A673 (cell line): ENCODE measurements at regions of chr5 and their contacts with region 1.

Region 1: DNA sequence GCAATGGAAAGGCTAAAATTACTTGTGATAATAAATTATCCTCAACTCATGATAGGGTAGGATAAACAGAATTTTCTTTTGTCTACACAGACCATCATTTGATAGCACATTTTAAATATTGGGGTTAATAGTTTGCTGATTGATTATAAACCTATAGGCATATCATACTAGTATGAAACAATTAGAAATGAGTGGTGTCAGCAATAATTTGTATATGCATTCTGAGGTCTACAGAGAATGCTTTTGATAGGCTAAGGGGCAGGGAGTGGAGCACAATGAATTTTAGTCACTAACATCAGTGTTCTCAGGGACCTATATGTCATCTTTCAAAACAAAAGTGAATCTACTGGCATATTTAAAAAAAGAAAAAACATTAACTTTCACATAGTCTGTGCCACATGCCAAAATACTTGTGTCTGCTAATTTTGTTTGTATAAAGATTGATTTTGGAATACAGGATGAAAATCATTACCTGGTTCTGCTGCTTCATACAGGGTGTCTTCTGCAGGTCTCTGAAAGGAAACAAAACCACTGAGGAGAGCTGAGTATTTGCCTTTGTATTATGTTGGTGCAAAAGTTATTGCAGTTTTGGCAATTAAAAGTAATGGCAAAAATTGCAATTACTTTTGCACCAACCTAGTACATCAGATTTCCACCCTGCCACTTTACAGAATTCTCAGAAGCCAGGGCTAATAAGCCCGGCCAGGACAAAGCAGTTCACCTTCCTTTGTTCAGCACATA is 27.9 kb upstream of the NADK2 start:
- DNase-seq: no peak
- H3K4me3 ChIP-seq: no peak overlapping the region
- H3K27ac ChIP-seq: no peak overlapping the region
- H3K4me1 ChIP-seq: peaks cover 10% of the 10 kb centered on the region
- H3K27me3 ChIP-seq: no peaks in the 10 kb centered on the region
- CTCF ChIP-seq: no peak

Region 2: DNA sequence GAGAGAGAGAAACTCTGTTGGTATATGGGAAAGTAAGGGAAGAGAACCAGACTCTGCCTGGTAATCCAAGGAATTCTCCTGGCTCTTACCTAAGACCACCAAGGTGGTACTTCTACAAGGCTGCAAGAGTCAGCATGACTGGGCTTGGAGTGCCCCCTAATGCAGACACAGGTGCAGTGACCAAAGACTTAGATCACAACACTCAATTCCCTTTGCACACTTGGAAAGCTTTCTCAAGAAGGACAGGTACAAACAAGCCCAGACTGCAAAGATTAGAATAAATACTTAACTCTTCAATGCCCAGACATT is 228.2 kb before region 1 on chr5:
- CTCF ChIA-PET with region 1: no interaction called
- POLR2A ChIA-PET with region 1: no interaction called
- intact Hi-C with region 1: no loop called
- DNase-seq: no peak
- H3K4me3 ChIP-seq: no peak overlapping the region
- H3K27ac ChIP-seq: peak overlapping the region; percentile 34
- H3K4me1 ChIP-seq: peaks cover 17% of the 10 kb centered on the region
- H3K27me3 ChIP-seq: no peaks in the 10 kb centered on the region
- CTCF ChIP-seq: no peak

Region 3: DNA sequence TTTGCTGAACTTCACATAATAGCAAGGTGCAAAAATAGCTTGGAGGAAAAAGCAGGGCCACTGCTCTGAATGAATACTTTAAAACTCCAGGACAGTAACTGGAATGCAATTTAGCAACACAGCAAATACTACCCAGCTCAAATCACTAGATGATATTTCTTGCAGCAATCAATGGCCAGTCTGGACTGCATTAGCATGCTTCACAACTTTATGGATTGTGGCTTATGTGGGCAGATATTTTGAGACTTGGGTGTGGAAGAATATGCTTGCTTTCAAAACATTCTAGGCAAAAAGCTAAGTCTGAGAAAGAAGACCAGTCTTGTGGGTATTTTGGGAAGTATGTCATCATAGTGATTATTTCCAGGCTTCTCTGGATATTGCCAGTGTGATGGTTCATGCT is 28.9 kb after region 1 on chr5:
- CTCF ChIA-PET with region 1: no interaction called
- POLR2A ChIA-PET with region 1: interaction called, 12 read pairs
- intact Hi-C with region 1: no loop called
- DNase-seq: no peak
- H3K4me3 ChIP-seq: no peak overlapping the region
- H3K27ac ChIP-seq: no peak overlapping the region
- H3K4me1 ChIP-seq: peaks cover 5% of the 10 kb centered on the region
- H3K27me3 ChIP-seq: no peaks in the 10 kb centered on the region
- CTCF ChIP-seq: no peak